Activated T-helper 2 cell treated with anti-CD3 and anti-CD28 coated beads, Interferon-gamma antibody, Interleukin-2, Interleukin-4, amounts not matched to agents 10 μg/mL and 5 μg/mL and 100 μg/mL, durations not matched to agents 14 hours and 24 hours and 36 hours (primary cell): ENCODE measurements at regions of chr12 and their contacts with region 1.

Region 1: GRCh38 chr12:48977315-48978281 is 524 bp upstream of the WNT1 start:
- DNase-seq: peak; percentile 61
- H3K4me3 Mint-ChIP-seq: peak overlapping the region; percentile 2
- H3K27ac Mint-ChIP-seq: peak overlapping the region; percentile 62
- H3K4me1 Mint-ChIP-seq: peaks cover 47% of the 10 kb centered on the region
- H3K27me3 Mint-ChIP-seq: peaks cover 82% of the 10 kb centered on the region

Region 2: DNA sequence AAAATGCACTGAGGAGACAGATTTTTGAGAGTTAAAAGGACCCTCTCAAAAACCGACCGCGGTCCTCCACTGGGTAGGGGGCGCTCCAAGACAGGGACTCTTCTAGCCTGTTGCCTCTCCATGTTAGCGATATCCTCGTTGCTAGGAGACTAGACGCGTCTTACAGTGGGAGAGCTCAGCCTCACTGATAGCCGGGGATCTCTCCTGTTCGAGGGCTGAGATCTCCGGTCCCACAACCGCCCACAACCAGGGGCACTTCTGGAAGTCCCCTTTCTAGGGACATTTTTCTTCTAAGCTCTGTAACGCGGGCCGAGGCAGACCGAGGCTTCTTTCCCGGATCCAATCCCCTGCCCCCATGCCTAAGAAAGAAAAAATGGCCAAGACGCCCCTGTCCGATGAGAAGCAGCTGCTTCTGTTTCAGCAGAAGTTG is 73.6 kb before region 1 on chr12:
- intact Hi-C with region 1: loop called (anchors 5 kb)
- DNase-seq: peak; percentile 69
- H3K4me3 Mint-ChIP-seq: peak overlapping the region; percentile 62
- H3K27ac Mint-ChIP-seq: no peak overlapping the region
- H3K4me1 Mint-ChIP-seq: peaks cover 9% of the 10 kb centered on the region
- H3K27me3 Mint-ChIP-seq: no peaks in the 10 kb centered on the region

Region 3: DNA sequence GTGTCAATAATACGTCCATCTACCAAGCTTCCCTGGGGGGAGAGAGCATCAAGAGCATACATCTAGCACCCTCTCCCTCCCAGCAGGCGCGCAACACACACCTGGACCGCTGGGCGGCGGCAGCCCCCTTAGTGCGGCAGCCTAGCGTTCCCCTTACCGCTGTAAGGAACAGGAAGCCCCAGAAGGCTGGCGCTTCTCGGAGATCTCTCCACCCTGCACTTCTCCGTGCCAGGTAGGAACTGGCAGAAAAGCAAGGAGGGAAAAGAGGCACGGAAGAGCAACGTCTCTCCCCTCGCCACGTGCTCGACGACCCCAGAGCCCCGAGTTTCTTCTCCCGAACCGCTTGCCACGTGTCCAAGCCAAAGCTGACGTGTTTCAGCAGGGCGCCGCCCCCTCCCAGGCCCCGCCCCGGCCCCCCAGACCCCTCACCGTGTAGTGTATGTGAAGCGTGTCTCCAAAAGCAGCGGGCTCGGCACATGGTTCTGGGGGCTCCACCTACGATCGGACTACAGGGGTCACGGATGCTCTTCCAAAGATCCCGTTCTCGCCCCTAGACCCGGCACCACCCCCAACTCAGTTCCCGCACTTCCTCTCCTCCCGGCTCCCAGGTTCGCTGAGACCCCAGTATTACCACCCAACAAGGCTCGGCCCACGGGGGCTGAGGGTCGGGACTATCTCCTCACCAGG is 52.8 kb before region 1 on chr12:
- intact Hi-C with region 1: loop called (anchors 2 kb)
- DNase-seq: peak; percentile 51
- H3K4me3 Mint-ChIP-seq: peak overlapping the region; percentile 87
- H3K27ac Mint-ChIP-seq: peak overlapping the region; percentile 76
- H3K4me1 Mint-ChIP-seq: peaks cover 26% of the 10 kb centered on the region
- H3K27me3 Mint-ChIP-seq: no peaks in the 10 kb centered on the region

Region 4: GRCh38 chr12:49188914-49189367 is 211.3 kb after region 1 on chr12 and contains the start of gene TUBA1A:
- intact Hi-C with region 1: no loop called
- DNase-seq: peak; percentile 96
- H3K4me3 Mint-ChIP-seq: peak within 1 kb of the TSS; percentile 92
- H3K27ac Mint-ChIP-seq: peak within 1 kb of the TSS; percentile 97
- H3K4me1 Mint-ChIP-seq: peaks cover 12% of the 10 kb centered on the region
- H3K27me3 Mint-ChIP-seq: peaks cover 7% of the 10 kb centered on the region
- total RNA-seq, gene TUBA1A: 86.9 and 94.0 TPM in 2 replicates

Region 5: DNA sequence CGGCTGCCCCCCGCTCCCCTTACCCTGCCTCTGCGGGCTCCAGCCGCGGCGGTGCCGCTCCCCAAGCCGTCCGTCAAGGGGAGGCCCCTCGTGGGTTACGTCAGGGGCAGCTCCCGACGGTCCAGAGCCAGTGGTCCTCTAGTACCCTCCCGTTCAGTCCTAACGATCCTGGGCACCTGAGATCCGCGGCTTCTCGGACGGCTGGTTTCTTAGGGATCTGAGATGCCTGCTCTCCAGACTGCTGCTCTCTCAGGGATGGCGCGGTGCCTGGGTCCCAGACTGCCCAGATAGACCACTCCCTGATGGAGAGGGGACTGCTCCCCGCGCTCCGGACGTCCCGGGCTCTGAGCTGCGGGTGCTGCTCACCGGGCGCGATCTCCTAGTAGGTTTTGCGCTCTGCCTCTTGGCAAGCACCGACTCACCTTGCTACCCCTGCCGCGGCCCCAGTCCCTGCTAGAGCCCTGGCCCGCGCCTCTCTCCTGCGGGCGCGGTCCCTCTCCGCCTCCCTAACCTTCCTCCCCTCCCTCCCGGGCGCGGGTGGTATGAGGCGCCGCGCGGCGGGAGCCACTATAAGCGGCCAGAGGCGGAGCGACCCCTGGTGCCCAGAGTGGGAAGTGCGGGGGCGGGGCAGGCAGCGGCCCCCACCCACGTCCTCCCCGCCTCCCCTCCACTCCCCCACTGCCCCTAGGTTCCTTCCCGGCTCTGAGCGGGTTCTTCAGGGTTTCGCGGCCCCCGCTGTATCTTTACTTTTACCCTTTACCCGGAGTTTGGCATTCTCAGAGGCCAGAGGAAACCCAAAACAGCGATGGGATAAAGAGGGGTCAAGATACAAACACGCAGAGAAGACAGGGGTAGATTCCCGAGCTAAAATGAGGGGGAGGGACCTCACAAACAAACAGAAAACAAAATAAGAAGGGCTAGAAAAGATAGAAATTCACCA is 359.3 kb after region 1 on chr12 and contains the start of gene C1QL4:
- intact Hi-C with region 1: loop called (anchors 5 kb)
- DNase-seq: peak; percentile 82
- H3K4me3 Mint-ChIP-seq: peak within 1 kb of the TSS; percentile 59
- H3K27ac Mint-ChIP-seq: no peak within 1 kb of the TSS
- H3K4me1 Mint-ChIP-seq: peaks cover 17% of the 10 kb centered on the region
- H3K27me3 Mint-ChIP-seq: peaks cover 78% of the 10 kb centered on the region
- total RNA-seq, gene C1QL4: not detected in 2 replicates